Right ventricle myocardium inferior (tissue), 1 donor: ENCODE measurements at regions of chr21 and their contacts with region 1.

Region 1: GRCh38 chr21:44510508-44511210 is 29.3 kb downstream of the KRTAP10-1 start:
- DNase-seq: peak; percentile 78
- ATAC-seq: peak; percentile 40

Region 2: GRCh38 chr21:44742418-44743153 is 231.9 kb after region 1 on chr21:
- intact Hi-C with region 1: loop called (anchors 10 kb)
- DNase-seq: no peak
- ATAC-seq: no peak

Region 3: DNA sequence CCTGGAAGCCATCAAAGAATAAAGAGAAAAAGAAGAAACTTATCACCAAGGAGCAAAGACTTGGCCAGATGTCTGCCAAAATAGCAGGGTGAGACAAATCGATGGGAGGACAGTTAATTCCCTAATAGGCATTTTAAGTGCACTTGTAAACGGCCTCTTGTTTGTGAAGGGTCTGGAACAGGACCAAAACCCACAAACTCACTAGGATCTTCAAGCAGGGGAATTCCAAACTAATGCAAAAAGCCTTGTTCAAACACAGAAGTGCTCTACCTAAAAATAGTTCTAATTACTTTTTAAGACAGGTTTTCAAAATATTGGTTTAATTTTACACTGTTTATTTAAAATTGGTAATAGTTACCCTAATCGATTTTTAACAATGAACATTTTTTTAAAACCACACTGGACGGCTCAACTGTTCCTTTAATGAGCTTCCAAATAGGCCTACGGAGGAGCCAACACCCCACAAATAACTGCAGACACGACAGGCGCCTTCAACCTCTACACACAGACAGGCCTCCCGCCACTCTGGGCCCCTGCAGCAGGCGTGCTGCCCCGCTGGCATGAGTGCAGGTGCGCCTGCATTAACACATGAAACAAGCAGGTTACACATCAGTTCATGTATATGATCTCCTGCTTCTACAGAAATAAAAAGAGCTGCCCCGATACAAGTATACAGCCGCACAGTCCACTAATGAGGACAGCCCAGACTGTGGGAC is 275.1 kb after region 1 on chr21:
- intact Hi-C with region 1: loop called (anchors 10 kb)
- DNase-seq: no peak
- ATAC-seq: no peak

Region 4: DNA sequence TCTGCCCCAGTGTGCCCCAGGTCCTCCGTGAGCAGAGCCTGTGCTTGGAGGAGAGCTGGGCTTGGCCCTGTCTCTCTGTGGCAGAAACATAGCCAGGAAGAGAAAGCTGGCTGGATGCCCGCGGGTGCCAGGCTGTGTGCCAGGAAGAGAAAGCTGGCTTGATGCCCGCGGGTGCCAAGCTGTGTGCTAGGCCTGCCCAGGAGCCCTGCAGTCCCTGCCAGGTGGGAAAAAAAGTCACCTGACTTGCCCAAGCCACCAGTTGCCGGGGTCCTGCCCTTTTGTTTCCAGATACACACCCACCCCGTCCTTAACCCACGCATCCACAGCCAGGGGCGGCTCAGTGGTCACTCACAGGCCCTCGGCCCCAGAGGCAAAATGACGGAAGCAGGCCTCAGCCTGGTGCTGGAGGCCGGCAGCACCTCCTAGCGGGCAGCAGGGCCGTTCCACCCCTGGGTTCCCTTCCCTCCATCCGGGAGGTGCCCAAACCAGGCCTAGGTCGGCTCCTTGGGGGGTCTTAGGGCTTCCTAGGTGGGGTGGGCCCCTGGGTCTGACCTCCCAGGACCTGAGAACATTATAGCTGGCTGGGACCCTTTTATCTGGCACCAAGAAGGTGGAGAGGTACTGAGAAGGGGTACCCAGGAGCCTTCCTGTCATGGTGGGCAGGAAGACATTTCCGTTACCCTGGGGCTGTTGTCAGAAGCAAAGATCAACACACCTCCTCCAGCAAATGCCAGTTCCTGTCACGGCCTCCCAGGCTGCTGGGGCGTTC is 400.9 kb after region 1 on chr21:
- intact Hi-C with region 1: loop called (anchors 10 kb)
- DNase-seq: peak; percentile 90
- ATAC-seq: peak; percentile 84